ENCODE measurements at regions of chr21 and their contacts with region 1.

Region 1: DNA sequence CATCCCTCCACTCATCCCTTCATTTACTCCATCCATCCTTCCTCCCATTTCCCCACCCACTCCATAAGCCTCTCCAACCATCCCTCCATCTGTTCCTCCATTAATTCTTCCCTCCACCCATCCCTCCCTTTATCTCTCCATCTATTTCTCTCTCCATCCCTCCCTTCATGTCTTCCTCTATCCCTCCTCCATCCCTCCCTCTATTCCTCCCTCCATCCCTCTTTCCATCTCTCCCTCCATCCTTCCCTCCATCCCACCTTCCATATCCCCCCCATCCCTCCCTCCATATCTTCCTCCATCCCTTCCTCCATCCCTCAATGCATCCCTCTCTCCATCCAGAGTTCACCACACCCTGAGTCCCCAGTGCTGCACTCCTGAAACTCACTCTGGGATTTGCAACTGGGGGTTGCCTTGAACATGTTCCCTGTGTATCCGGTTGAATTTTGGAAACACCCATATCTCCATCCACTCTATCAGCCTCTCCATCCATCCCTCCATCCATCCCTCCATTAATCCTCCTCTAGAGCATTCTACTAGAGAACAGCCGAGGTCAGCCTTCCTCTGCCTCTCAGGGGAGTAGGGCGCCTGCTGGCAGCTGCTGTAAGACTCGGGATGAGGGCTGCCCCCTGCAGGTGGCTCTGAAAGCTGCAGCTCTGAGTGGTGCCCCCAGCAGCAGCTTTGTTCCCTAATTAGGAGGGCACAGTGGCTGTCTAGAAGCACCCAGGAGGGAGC is 39.4 kb downstream of the ABCG1 start:
- DNase-seq: peak; percentile 83
- H3K4me3 Mint-ChIP-seq: no peak overlapping the region
- H3K27ac Mint-ChIP-seq: no peak overlapping the region
- H3K4me1 Mint-ChIP-seq: peaks cover 10% of the 10 kb centered on the region
- H3K27me3 Mint-ChIP-seq: no peaks in the 10 kb centered on the region

Region 2: DNA sequence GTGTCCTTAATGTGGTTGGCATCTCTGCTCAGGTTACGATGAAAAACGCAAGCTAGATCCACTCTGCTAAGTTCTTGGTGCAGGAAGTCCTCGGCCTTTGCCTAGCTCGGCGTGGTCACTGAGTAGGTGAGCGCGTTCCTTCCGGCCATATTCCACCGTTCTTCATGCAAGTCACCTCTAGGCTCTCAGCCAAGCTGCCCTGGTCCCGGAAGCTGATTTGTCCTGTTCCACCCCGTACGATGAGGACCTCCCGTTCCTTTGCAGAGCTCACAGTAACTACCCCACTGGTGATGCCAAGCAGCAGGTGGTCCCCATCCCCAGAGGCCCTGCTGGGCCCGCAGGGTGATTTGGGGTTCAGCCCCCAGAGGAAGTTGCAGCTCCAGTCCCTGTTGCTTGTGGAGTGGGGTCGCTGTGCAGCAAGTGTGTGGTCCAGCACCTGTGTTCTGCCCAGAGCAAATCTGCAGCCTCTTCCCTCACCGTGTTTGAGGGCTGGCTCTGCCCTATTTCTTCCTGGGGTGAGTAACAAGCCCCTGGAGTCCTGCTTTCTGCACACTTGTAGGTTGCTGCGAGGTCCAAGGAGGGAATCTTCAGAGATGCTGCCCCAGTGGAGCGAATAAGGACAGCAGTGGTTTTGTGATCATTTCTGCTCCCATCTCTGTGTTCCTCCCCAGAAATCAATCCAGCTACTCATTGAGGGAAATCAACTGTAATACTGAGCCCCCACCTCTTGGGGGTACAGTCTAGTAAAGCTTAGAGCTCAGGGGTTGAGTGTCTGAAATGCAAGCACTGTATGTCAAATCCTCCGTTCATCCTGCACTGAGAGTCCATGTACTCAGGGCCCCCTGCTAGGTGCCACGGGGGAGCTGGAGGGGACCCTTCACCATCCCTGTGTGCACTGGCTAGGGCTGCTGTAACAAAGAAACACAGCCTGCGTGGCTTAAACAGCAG is 184.9 kb before region 1 on chr21:
- CTCF ChIA-PET with region 1: no interaction called
- POLR2A ChIA-PET with region 1: no interaction called
- DNase-seq: no peak
- H3K4me3 Mint-ChIP-seq: no peak overlapping the region
- H3K27ac Mint-ChIP-seq: no peak overlapping the region
- H3K4me1 Mint-ChIP-seq: no peaks in the 10 kb centered on the region
- H3K27me3 Mint-ChIP-seq: peaks cover 7% of the 10 kb centered on the region

Region 3: DNA sequence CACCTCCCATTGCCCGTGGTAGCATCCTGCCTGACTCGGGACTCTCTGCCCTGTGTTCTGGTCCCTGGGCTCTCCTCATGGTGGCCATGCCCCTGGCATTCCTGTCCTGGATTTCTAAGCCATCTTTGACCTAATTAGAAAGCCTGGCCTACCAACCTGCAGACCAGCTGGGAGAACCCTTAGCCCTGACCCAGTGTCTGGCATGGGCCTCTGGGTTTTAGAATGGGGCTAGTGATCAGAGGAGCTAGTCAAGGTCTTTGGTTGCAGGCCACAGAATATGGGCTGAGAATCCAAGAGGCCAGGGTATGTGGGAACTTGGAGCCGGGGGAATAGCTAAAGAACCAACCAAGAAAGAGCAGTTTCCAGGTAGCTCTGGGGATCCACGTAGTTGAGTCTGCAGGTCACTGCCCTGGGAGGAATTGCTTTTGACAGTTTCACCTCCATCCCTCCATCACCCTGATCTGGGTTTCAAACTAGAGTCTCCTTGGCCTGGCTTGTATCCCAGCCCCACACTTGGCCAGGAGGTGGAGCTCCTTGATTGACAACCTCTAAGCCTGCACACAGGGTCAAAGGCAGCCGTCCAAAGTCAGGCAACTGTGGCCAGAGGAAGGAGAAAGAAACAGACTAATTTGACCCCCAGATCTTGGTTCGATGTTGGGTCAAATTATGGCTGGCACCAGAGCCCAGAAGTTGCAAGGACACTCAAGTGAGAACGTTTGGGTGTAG is 94.1 kb before region 1 on chr21:
- CTCF ChIA-PET with region 1: interaction called, 91 read pairs
- POLR2A ChIA-PET with region 1: interaction called, 15 read pairs
- DNase-seq: peak; percentile 71
- H3K4me3 Mint-ChIP-seq: no peak overlapping the region
- H3K27ac Mint-ChIP-seq: no peak overlapping the region
- H3K4me1 Mint-ChIP-seq: peaks cover 16% of the 10 kb centered on the region
- H3K27me3 Mint-ChIP-seq: peaks cover 3% of the 10 kb centered on the region

Region 4: GRCh38 chr21:42193131-42193671 is 65.1 kb before region 1 on chr21:
- CTCF ChIA-PET with region 1: interaction called, 16 read pairs
- POLR2A ChIA-PET with region 1: interaction called, 15 read pairs
- DNase-seq: peak; percentile 89
- H3K4me3 Mint-ChIP-seq: peak overlapping the region; percentile 12
- H3K27ac Mint-ChIP-seq: peak overlapping the region; percentile 70
- H3K4me1 Mint-ChIP-seq: peaks cover 72% of the 10 kb centered on the region
- H3K27me3 Mint-ChIP-seq: peaks cover 15% of the 10 kb centered on the region

Region 5: DNA sequence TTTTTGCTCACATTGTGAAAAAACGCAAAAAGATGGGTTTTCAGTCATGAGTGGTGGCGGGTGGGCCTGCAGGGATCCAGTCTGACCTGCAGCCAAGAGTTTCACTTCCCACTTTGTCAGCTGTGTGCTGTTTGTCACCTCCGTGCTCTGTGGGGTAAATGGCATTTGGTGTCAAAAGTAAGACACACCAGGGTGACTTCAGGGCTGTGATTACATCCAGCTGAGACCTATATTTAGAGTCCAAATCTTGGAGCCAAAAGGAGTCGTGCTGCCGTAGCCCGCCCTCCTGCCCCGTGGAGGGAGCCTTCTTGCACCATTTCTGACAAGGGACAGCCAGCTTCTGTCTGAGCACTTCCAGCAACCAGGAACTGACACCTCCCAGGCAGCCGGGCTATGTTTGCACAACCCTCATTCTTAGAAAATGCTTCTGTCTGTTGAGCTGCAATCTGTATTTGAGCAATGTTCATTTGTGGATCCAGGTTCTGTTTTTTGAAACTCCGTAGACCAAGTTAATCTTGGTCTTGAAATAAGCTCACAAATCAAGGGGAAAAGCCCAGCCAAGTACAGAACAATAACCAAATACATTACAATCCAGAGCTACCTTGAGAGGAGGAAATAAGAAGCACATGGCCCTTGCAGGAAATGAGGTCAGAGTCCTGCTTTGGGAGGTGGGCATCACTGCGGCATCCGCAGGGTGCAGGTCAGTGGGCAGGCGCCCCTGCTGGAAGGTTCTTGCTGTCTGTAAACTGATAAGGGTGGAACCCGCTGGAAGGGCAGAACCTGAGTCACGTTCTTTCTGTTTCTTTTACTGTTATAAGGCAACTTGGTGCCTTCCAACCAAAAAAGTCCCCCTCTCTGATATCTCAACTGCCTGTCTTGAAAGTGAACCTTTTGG is 25.0 kb before region 1 on chr21:
- CTCF ChIA-PET with region 1: interaction called, 50 read pairs
- POLR2A ChIA-PET with region 1: interaction called, 18 read pairs
- DNase-seq: peak; percentile 87
- H3K4me3 Mint-ChIP-seq: peak overlapping the region; percentile 33
- H3K27ac Mint-ChIP-seq: peak overlapping the region; percentile 94
- H3K4me1 Mint-ChIP-seq: peaks cover 96% of the 10 kb centered on the region
- H3K27me3 Mint-ChIP-seq: no peaks in the 10 kb centered on the region